ENCODE measurements at regions of chr1 and their contacts with region 1.

Region 1: GRCh38 chr1:223429313-223429731 is 36.1 kb downstream of the CCDC185 start:
- DNase-seq: peak; percentile 86
- H3K4me3 ChIP-seq: no peak overlapping the region
- H3K27ac ChIP-seq: peak overlapping the region; percentile 42
- H3K4me1 ChIP-seq: peaks cover 17% of the 10 kb centered on the region
- H3K27me3 ChIP-seq: no peaks in the 10 kb centered on the region
- CTCF ChIP-seq: peak; percentile 11 to 43

Region 2: DNA sequence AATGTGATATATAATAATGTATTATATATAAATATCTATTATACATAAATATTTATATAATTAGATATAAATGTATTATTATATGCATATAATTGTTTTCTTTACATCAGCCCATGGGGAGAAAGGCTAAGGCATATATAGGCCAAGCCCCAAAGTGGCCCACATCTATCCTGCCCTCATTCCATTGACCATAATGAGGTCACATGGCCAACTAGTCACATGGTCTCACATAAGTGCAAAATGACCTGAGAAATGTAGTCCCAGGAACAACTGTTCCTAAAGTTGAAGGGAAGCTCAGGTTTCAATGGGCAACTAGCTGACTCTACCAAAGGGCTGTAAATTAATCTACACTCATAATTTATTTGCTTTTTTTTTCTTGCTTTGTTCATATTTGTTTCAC is 50.6 kb before region 1 on chr1:
- CTCF ChIA-PET with region 1: no interaction called
- dilution Hi-C with region 1: loop called (anchors 10 kb)
- in situ Hi-C with region 1: no loop called
- intact Hi-C with region 1: no loop called
- DNase-seq: no peak
- H3K4me3 ChIP-seq: no peak overlapping the region
- H3K27ac ChIP-seq: no peak overlapping the region
- H3K4me1 ChIP-seq: no peaks in the 10 kb centered on the region
- H3K27me3 ChIP-seq: no peaks in the 10 kb centered on the region
- CTCF ChIP-seq: no peak

Region 3: DNA sequence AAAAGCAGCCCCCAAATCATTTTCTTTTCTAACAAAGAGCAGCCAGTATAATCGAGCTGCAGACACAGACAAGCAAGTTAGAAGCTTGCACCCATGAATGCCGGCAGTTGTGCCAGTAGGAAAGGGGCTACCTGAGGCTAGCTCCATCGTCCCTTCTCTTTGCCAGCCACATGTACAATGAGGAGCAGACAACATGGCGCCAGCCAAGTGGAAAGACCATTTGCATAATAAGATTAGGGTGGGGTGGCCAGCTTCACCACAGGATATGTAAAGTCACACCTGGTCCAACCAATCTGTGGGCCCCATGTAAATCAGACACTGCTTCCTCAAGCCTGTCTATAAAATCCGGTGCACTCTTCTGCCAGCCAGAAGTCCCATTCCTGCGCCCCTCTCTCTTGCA is 67.6 kb after region 1 on chr1:
- CTCF ChIA-PET with region 1: no interaction called
- dilution Hi-C with region 1: loop called (anchors 5 kb)
- in situ Hi-C with region 1: no loop called
- intact Hi-C with region 1: no loop called
- DNase-seq: no peak
- H3K4me3 ChIP-seq: no peak overlapping the region
- H3K27ac ChIP-seq: no peak overlapping the region
- H3K4me1 ChIP-seq: peaks cover 27% of the 10 kb centered on the region
- H3K27me3 ChIP-seq: no peaks in the 10 kb centered on the region
- CTCF ChIP-seq: no peak

Region 4: GRCh38 chr1:223780949-223781348 is 351.6 kb after region 1 on chr1:
- CTCF ChIA-PET with region 1: no interaction called
- dilution Hi-C with region 1: no loop called
- in situ Hi-C with region 1: no loop called
- intact Hi-C with region 1: no loop called
- DNase-seq: no peak
- H3K4me3 ChIP-seq: no peak overlapping the region
- H3K27ac ChIP-seq: no peak overlapping the region
- H3K4me1 ChIP-seq: peaks cover 7% of the 10 kb centered on the region
- H3K27me3 ChIP-seq: no peaks in the 10 kb centered on the region
- CTCF ChIP-seq: no peak